ENCODE measurements at regions of chr5 and their contacts with region 1.

Region 1: GRCh38 chr5:86880785-86881492 is 263.2 kb downstream of the COX7C start:
- DNase-seq: peak in 28 of 35 experiments; percentile 0 to 57 (median 5)
- ATAC-seq: peak; percentile 60 to 86 (median 77)
- H3K4me3 ChIP-seq: no peak overlapping the region
- H3K4me3 Mint-ChIP-seq: no peak overlapping the region
- H3K27ac ChIP-seq: no peak overlapping the region
- H3K27ac Mint-ChIP-seq: no peak overlapping the region
- H3K4me1 ChIP-seq: no peaks in the 10 kb centered on the region
- H3K4me1 Mint-ChIP-seq: no peaks in the 10 kb centered on the region
- H3K27me3 ChIP-seq: peaks cover 0 to 2% of the 10 kb centered on the region in 2 experiments
- H3K27me3 Mint-ChIP-seq: peaks cover 1 to 11% of the 10 kb centered on the region in 2 donors

Region 2: DNA sequence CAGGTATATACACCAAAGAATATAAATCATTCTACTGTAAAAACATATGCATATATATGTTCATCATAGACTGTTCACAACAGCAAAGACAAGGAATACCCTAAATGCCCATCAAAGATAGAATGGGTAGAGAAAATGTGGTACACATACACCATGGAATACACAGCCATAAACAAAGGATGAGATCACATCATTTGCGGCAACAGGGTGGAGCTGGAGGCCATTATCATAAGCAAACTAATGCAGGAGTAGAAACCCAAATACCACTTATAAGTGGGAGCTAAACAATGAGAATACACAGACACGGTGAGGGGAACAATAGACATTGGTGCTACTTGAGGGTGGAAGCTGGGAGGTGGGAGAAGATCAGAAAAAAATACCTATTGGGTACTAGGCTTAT is 145.6 kb before region 1 on chr5:
- CTCF ChIA-PET with region 1: no interaction called
- POLR2A ChIA-PET with region 1: no interaction called
- DNase-seq: no peak
- ATAC-seq: no peak
- H3K4me3 ChIP-seq: no peak overlapping the region
- H3K4me3 Mint-ChIP-seq: no peak overlapping the region
- H3K27ac ChIP-seq: no peak overlapping the region
- H3K27ac Mint-ChIP-seq: no peak overlapping the region
- H3K4me1 ChIP-seq: no peaks in the 10 kb centered on the region
- H3K4me1 Mint-ChIP-seq: no peaks in the 10 kb centered on the region
- H3K27me3 ChIP-seq: no peaks in the 10 kb centered on the region
- H3K27me3 Mint-ChIP-seq: peaks cover 0 to 1% of the 10 kb centered on the region in 2 donors

Region 3: GRCh38 chr5:86968301-86968753 is 87.4 kb after region 1 on chr5:
- CTCF ChIA-PET with region 1: interaction called in 1 of 2 experiments, 19 read pairs
- POLR2A ChIA-PET with region 1: interaction called in 1 of 2 experiments, 3 read pairs
- DNase-seq: peak in 2 of 35 experiments; percentile 0 to 46
- ATAC-seq: no peak
- H3K4me3 ChIP-seq: no peak overlapping the region
- H3K4me3 Mint-ChIP-seq: no peak overlapping the region
- H3K27ac ChIP-seq: no peak overlapping the region
- H3K27ac Mint-ChIP-seq: no peak overlapping the region
- H3K4me1 ChIP-seq: no peaks in the 10 kb centered on the region
- H3K4me1 Mint-ChIP-seq: peaks cover 0 to 10% (median 7%) of the 10 kb centered on the region in 3 donors
- H3K27me3 ChIP-seq: no peaks in the 10 kb centered on the region
- H3K27me3 Mint-ChIP-seq: peaks cover 3 to 4% of the 10 kb centered on the region in 2 donors

Measured in T-cell (primary cell).